Tibial artery (tissue), 4 donors: ENCODE measurements at regions of chr6 and their contacts with region 1.

Region 1: DNA sequence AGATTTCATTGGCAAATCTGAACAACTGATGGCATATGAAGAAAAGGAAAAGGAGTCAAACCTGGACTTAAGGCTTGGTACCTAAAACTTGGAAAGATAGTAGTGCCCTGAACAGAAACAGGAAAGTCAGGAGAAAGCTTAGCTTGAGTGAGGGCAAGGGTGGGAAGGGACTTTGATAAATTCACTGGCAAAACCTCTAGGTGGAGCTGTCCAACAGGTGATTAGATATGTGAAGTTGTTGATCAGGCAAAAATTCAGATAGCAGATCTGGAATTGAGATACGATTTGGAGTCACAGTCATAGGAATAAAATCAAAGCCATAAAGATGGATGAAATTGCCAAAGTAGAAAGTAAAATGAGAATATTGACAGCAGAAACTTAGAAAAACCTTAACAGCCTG is 16.1 kb upstream of the ZNF292 start:
- DNase-seq: no peak
- H3K4me3 ChIP-seq: no peak overlapping the region
- H3K27ac ChIP-seq: no peak overlapping the region
- H3K4me1 ChIP-seq: no peaks in the 10 kb centered on the region
- H3K27me3 ChIP-seq: peaks cover 0 to 4% of the 10 kb centered on the region in 2 donors
- CTCF ChIP-seq: peak; percentile 65 to 67

Region 2: GRCh38 chr6:87237804-87238203 is 98.6 kb after region 1 on chr6:
- intact Hi-C with region 1: loop called (anchors 10 kb)
- DNase-seq: no peak
- H3K4me3 ChIP-seq: no peak overlapping the region
- H3K27ac ChIP-seq: no peak overlapping the region
- H3K4me1 ChIP-seq: no peaks in the 10 kb centered on the region
- H3K27me3 ChIP-seq: no peaks in the 10 kb centered on the region
- CTCF ChIP-seq: peak; percentile 51 to 55

Region 3: GRCh38 chr6:87393022-87393622 is 253.9 kb after region 1 on chr6:
- intact Hi-C with region 1: loop called (anchors 10 kb)
- DNase-seq: no peak
- H3K4me3 ChIP-seq: no peak overlapping the region
- H3K27ac ChIP-seq: no peak overlapping the region
- H3K4me1 ChIP-seq: no peaks in the 10 kb centered on the region
- H3K27me3 ChIP-seq: no peaks in the 10 kb centered on the region
- CTCF ChIP-seq: peak; percentile 76 to 80